ENCODE measurements at regions of chr17 and their contacts with region 1.

Region 1: DNA sequence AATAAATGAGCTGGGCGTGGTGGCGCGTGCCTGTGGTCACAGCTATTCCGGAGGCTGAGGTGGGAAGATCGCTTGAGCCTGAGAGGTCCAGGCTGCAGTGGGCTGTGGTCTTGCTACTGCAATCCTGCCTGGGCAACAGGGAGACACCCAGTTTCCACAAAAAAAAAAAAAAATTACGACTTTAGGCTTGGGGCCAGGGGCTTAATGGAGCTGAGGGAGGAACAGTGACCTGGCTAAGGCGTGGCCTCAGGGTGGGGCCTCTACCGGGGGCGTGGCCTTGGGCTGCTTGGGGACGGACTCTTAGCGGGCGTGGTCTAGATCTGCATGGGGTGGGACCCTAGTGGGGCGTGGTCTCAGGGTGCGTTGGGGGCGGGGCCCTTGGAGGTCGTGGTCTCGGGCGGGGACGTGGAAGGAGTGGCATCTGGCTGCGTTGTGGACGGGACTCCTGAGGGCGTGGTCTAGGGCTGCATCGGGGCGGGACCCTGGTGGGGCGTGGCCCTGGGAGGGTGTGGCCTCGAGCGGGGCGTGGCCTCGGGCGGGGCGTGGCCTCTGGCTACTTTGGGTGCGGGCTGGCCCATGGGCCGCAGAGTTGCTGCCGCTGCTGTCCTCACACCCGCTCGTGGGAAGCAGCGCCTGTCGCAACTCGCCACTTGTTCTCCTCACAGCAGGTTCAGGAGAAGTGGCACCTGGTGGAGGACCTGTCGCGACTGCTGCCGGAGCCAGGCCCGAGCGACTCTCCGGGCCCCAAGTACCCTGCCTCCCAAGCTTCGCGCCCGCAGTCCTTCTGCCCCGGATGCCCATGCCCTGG is 5.8 kb upstream of the C17orf99 start:
- DNase-seq: peak; percentile 98
- H3K4me3 Mint-ChIP-seq: peak overlapping the region; percentile 41
- H3K27ac Mint-ChIP-seq: peak overlapping the region; percentile 83
- H3K4me1 Mint-ChIP-seq: peaks cover 57% of the 10 kb centered on the region
- H3K27me3 Mint-ChIP-seq: no peaks in the 10 kb centered on the region

Region 2: DNA sequence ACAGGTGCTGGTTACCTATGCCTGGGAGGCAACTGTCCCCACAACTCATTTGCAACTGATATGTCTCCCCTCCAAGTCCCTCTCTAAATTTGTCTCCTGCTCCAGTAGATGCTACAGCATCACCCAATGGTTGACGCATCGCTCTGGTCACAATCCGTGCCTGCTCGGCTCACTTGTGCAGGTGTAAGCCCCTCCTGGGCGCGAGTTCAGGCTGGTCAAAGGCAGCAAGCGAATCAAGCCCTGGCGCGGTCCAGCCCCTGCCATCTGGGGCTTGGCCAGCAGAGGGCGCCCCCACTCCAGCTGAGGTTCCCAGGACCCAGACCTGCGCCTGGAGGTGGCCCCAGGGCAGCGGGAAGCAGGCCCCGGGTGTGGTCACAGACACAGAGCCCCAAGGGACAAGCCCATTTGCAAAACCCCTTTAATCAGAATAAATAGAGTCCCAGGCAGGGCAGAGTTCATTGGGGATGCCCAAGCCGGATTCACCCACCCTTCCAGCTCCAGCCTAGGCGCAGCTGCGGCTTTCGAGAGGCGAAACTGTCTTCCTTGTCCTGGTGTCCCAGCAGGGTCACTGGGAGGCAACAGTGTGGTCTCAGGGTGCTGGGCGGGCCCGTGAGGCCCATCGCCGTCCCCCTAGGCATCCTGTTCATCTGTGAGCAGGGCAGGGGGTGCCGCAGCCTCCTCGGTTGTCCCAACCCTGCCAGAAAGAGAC is 27.7 kb before region 1 on chr17:
- CTCF ChIA-PET with region 1: interaction called, 89 read pairs
- POLR2A ChIA-PET with region 1: interaction called, 7 read pairs
- DNase-seq: peak; percentile 77
- H3K4me3 Mint-ChIP-seq: no peak overlapping the region
- H3K27ac Mint-ChIP-seq: peak overlapping the region; percentile 83
- H3K4me1 Mint-ChIP-seq: peaks cover 41% of the 10 kb centered on the region
- H3K27me3 Mint-ChIP-seq: no peaks in the 10 kb centered on the region

Region 3: GRCh38 chr17:78128551-78129350 is 11.6 kb before region 1 on chr17 and contains the start of gene TMC6:
- CTCF ChIA-PET with region 1: interaction called, 118 read pairs
- POLR2A ChIA-PET with region 1: interaction called, 6 read pairs
- DNase-seq: peak; percentile 82
- H3K4me3 Mint-ChIP-seq: peak within 1 kb of the TSS; percentile 88
- H3K27ac Mint-ChIP-seq: peak within 1 kb of the TSS; percentile 99
- H3K4me1 Mint-ChIP-seq: peaks cover 43% of the 10 kb centered on the region
- H3K27me3 Mint-ChIP-seq: no peaks in the 10 kb centered on the region
- total RNA-seq, gene TMC6: 414 to 438 TPM

Measured in activated CD4-positive, alpha-beta T cell treated with anti-CD3 and anti-CD28 coated beads, Interleukin-2, amount 10 ng/mL, durations not matched to agents 7 days and 5 days (primary cell).